ENCODE measurements at regions of chrX and their contacts with region 1.

Region 1: GRCh38 chrX:155094468-155095061 is 23.3 kb downstream of the BRCC3 start:
- DNase-seq: peak; percentile 13
- H3K4me3 Mint-ChIP-seq: no peak overlapping the region
- H3K27ac Mint-ChIP-seq: no peak overlapping the region
- H3K4me1 Mint-ChIP-seq: no peaks in the 10 kb centered on the region
- H3K27me3 Mint-ChIP-seq: no peaks in the 10 kb centered on the region
- CTCF ChIP-seq: peak; percentile 51

Region 2: GRCh38 chrX:155148724-155149537 is 54.4 kb after region 1 on chrX:
- CTCF ChIA-PET with region 1: no interaction called
- intact Hi-C with region 1: loop called (anchors 2 kb)
- DNase-seq: peak; percentile 38
- H3K4me3 Mint-ChIP-seq: no peak overlapping the region
- H3K27ac Mint-ChIP-seq: no peak overlapping the region
- H3K4me1 Mint-ChIP-seq: no peaks in the 10 kb centered on the region
- H3K27me3 Mint-ChIP-seq: peaks cover 12% of the 10 kb centered on the region
- CTCF ChIP-seq: peak; percentile 56

Region 3: DNA sequence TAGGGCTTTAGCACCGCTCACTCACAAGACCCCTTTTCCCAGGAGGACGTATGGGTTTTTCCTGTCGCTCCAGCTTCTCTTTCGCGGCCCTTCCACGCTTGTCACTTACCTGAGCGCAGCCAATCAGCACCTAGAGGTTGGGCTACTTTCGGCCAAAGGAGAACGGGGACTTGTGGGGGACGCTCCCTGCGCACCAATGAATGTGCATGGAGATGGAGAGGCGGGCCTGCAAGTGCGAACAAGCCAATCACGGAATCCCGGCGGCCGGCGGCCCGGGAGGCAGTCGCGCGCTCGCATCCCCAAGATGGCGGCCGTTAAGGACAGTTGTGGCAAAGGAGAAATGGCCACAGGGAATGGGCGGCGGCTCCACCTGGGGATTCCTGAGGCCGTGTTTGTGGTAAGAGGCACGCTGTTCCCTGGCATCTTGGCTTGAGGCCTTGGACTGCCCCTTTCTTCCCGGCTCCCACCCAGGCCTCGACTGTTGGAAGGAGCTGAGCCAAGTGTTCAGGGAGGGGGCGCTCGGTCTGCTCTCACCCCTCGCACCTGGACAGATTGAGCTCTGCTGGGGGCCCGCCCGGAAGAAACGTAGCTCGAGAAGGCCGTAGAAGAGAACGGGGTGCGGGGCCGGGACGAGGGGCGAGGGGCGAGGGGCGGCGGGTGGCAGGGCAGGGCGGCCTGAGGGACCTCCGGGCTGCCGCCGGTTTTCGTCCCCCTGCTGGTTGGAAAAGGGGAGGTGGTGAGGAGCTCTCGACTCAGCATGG is 121.8 kb after region 1 on chrX and contains the start of gene VBP1:
- CTCF ChIA-PET with region 1: no interaction called
- intact Hi-C with region 1: loop called (anchors 10 kb)
- DNase-seq: peak; percentile 91
- H3K4me3 Mint-ChIP-seq: peak within 1 kb of the TSS; percentile 84
- H3K27ac Mint-ChIP-seq: peak within 1 kb of the TSS; percentile 67
- H3K4me1 Mint-ChIP-seq: peaks cover 8% of the 10 kb centered on the region
- H3K27me3 Mint-ChIP-seq: no peaks in the 10 kb centered on the region
- CTCF ChIP-seq: peak; percentile 56
- total RNA-seq, gene VBP1: 56.3 and 58.1 TPM in 2 replicates

Region 4: DNA sequence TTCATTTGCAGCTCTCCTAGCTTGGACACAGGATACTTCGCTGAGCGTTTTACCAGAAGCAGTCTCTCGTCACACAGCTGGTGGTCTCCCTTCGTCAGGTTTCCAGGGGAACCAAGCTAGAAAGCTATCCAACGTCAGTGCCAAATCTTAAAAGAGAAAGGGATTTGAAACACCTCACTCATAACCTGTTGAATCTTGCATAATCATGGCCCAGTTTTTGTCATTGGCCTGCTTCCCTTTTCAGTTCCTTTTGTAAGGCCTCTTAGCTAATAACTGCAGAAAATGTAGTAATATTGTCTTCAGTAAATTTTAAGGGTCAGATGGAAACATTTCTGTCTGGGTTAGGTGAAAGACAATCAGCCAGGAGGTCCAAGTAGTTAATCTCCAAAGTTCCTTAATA is 147.7 kb after region 1 on chrX:
- CTCF ChIA-PET with region 1: no interaction called
- intact Hi-C with region 1: no loop called
- DNase-seq: no peak
- H3K4me3 Mint-ChIP-seq: no peak overlapping the region
- H3K27ac Mint-ChIP-seq: no peak overlapping the region
- H3K4me1 Mint-ChIP-seq: peaks cover 12% of the 10 kb centered on the region
- H3K27me3 Mint-ChIP-seq: no peaks in the 10 kb centered on the region
- CTCF ChIP-seq: no peak

Region 5: GRCh38 chrX:155399598-155399997 is 305.0 kb after region 1 on chrX:
- CTCF ChIA-PET with region 1: no interaction called
- intact Hi-C with region 1: no loop called
- DNase-seq: no peak
- H3K4me3 Mint-ChIP-seq: no peak overlapping the region
- H3K27ac Mint-ChIP-seq: no peak overlapping the region
- H3K4me1 Mint-ChIP-seq: no peaks in the 10 kb centered on the region
- H3K27me3 Mint-ChIP-seq: no peaks in the 10 kb centered on the region
- CTCF ChIP-seq: no peak

Region 6: GRCh38 chrX:155682834-155683233 is 588.3 kb after region 1 on chrX:
- CTCF ChIA-PET with region 1: no interaction called
- intact Hi-C with region 1: no loop called
- DNase-seq: no peak
- H3K4me3 Mint-ChIP-seq: no peak overlapping the region
- H3K27ac Mint-ChIP-seq: no peak overlapping the region
- H3K4me1 Mint-ChIP-seq: no peaks in the 10 kb centered on the region
- H3K27me3 Mint-ChIP-seq: no peaks in the 10 kb centered on the region
- CTCF ChIP-seq: no peak

Region 7: DNA sequence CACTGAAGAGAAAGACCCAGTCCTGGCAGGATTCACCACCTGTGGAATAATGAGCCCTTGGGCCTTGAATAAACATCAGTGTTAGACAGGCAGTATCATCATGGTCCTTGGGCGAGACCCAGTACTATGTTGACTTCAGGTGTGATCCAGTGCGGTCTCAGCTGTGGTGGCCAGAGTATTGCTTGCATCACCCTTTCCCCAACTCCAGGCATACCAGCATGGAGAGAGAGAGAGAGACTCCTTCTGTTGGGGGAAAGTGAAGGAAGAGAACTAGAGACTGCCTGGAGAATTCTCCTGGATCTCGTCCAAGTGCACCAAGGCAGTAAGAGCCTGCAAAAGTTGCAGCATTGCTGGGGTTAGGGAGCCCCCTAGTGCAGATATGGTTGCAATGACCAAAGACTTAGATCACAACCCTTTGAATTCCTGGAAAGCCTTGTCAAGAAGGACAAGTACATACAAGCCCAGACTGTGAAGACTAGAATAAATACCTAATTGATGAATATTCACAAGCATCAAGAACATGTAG is 725.5 kb after region 1 on chrX:
- CTCF ChIA-PET with region 1: no interaction called
- intact Hi-C with region 1: loop called (anchors 10 kb)
- DNase-seq: peak; percentile 73
- H3K4me3 Mint-ChIP-seq: no peak overlapping the region
- H3K27ac Mint-ChIP-seq: no peak overlapping the region
- H3K4me1 Mint-ChIP-seq: no peaks in the 10 kb centered on the region
- H3K27me3 Mint-ChIP-seq: no peaks in the 10 kb centered on the region
- CTCF ChIP-seq: peak; percentile 53